H1 (cell line): ENCODE measurements at regions of chr1 and their contacts with region 1.

Region 1: DNA sequence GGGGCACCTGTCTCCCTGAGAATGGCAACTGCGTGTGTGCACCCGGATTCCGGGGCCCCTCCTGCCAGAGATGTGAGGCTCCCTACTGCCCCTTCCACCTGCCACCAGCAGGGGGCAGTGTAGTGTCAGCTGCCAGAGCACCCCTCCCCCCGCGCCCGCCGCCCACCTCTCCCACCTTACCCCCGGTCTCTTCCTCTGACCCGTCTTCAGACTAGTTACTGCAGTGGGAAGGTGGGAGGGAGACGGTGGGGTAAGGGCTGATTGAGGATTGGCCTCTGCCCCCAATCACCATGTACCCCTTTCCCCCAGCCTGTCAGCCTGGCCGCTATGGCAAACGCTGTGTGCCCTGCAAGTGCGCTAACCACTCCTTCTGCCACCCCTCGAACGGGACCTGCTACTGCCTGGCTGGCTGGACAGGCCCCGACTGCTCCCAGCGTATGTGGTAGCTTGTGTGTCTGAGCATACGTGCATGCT is 10.1 kb upstream of the LRRC71 start:
- DNase-seq: peak in 1 of 2 experiments; percentile 93
- H3K4me3 ChIP-seq: peak overlapping the region in 3 of 4 experiments; percentile 45 to 56 (median 49); a peak in 6 of 8 replicates
- H3K27ac ChIP-seq: no peak overlapping the region
- H3K4me1 ChIP-seq: peaks cover 2 to 12% (median 10%) of the 10 kb centered on the region in 4 experiments
- H3K27me3 ChIP-seq: peaks cover 0 to 15% (median 11%) of the 10 kb centered on the region in 4 experiments; a peak in 6 of 7 replicates
- CTCF ChIP-seq: peak in 2 of 3 experiments; percentile 72 to 74; a peak in 3 of 4 replicates
- EP300 ChIP-seq: no peak
- POLR2A ChIP-seq: no peak
- RAD21 ChIP-seq: peak; percentile 34 to 46

Region 2: GRCh38 chr1:156852418-156852874 is 57.9 kb before region 1 on chr1:
- CTCF ChIA-PET with region 1: interaction called, 10 read pairs
- POLR2A ChIA-PET with region 1: interaction called, 3 read pairs
- DNase-seq: no peak
- H3K4me3 ChIP-seq: no peak overlapping the region
- H3K27ac ChIP-seq: no peak overlapping the region
- H3K4me1 ChIP-seq: peaks cover 0 to 16% (median 2%) of the 10 kb centered on the region in 4 experiments; a peak in 5 of 7 replicates
- H3K27me3 ChIP-seq: peaks cover 28 to 78% (median 48%) of the 10 kb centered on the region in 4 experiments
- CTCF ChIP-seq: no peak
- EP300 ChIP-seq: no peak
- POLR2A ChIP-seq: no peak
- RAD21 ChIP-seq: no peak

Region 3: DNA sequence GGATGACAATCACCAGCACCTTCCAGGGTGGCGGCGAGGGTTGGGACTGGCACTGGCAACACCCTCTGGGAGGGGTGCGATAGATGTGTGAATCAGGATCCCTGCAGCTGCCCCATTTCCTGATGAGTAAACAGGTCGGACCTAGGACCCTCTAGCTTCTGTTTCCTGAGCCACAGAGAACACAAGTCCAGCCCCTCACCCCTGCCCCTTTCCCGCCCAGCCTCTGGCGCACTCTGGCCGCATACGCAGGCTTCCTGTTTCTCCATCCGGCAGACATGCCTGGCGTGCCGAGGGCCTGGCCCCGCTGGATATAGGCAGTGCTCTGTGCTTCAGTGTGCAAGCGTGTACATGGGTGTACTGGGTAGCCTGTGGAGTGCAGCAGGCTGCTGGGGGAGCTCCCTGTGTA is 12.2 kb before region 1 on chr1:
- CTCF ChIA-PET with region 1: interaction called, 73 read pairs
- POLR2A ChIA-PET with region 1: interaction called, 4 read pairs
- DNase-seq: no peak
- H3K4me3 ChIP-seq: no peak overlapping the region
- H3K27ac ChIP-seq: no peak overlapping the region
- H3K4me1 ChIP-seq: peaks cover 0 to 9% (median 2%) of the 10 kb centered on the region in 4 experiments; a peak in 5 of 7 replicates
- H3K27me3 ChIP-seq: peaks cover 2 to 24% (median 21%) of the 10 kb centered on the region in 4 experiments
- CTCF ChIP-seq: no peak
- EP300 ChIP-seq: no peak
- POLR2A ChIP-seq: no peak
- RAD21 ChIP-seq: no peak

Region 4: DNA sequence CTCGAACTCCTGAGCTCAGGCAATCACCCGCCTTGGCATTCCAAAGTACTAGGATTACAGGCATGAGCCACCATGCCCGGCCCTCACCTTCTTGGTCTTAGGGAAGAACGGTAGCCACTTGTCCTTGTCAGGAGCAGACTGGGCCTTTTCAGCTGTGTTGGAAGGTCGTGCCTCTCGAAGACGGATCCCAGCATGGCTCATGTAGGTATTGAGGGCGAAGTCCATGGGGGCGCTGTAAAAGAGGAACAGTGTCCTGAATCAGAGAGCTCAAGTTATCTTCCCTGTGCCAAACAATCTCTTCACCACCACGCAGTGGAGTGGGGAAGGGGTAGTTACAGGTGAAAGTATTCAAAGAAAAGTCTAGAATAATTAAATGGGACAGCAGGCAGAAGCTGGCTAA is 46.0 kb after region 1 on chr1:
- CTCF ChIA-PET with region 1: no interaction called
- POLR2A ChIA-PET with region 1: no interaction called
- DNase-seq: no peak
- H3K4me3 ChIP-seq: no peak overlapping the region
- H3K27ac ChIP-seq: no peak overlapping the region
- H3K4me1 ChIP-seq: no peaks in the 10 kb centered on the region
- H3K27me3 ChIP-seq: no peaks in the 10 kb centered on the region
- CTCF ChIP-seq: no peak
- EP300 ChIP-seq: no peak
- POLR2A ChIP-seq: no peak
- RAD21 ChIP-seq: no peak